AG04450 (cell line): ENCODE measurements at regions of chr19 and their contacts with region 1.

Region 1: DNA sequence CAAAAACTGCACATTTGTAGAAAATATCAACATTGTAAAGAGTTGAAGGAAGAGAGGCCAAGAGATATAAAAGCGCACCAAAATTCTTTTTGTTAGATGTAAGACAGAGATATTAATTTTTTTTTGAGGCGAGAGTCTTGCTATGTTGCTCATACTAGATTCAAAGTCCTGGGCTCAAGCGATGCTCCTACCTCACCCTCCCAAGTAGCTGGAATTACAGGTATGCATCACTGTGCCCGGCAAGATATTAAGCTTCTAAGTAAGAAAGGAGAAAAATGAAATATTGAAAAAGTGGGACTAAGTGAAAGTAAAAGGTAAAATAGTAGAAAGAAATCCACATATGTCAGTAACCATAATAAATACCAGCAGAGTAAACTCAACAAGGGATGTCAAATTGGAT is 12.3 kb downstream of the SIGLEC5 start:
- DNase-seq: no peak
- H3K4me3 ChIP-seq: no peak overlapping the region
- H3K27ac ChIP-seq: no peak overlapping the region
- H3K27me3 ChIP-seq: no peaks in the 10 kb centered on the region
- CTCF ChIP-seq: no peak

Region 2: DNA sequence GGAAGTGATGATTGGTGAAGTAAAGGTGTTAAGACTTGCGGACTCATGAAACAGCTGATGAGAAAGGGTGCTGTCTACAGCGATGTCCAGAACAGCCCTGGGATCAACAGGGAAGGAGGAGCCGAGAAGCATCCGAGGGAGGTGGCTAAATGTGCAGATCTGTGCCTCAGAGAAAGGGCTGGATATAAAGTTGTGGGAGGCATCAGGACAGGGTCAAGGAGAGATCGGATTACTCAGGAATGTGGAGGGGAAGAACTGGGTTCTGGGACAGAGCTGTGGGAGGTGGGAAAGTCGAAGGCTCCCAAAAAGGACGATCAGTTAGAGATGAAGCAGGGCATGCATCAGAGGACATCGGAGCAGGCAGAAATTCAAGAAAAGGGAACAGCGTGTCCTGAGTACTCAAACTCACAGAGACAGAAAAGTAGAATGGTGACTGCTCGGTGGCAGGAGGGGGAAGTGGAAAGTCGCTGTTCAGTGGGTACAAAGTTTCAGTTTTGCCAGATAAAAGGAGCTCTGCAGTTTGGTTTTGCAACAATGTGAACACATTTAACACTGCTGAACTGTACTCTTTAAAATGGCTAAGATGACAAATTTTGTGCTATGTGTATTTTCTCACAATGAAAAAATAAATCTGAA is 26.9 kb after region 1 on chr19:
- CTCF ChIA-PET with region 1: interaction called, 12 read pairs
- POLR2A ChIA-PET with region 1: no interaction called
- DNase-seq: no peak
- H3K4me3 ChIP-seq: no peak overlapping the region
- H3K27ac ChIP-seq: no peak overlapping the region
- H3K27me3 ChIP-seq: no peaks in the 10 kb centered on the region
- CTCF ChIP-seq: no peak

Region 3: DNA sequence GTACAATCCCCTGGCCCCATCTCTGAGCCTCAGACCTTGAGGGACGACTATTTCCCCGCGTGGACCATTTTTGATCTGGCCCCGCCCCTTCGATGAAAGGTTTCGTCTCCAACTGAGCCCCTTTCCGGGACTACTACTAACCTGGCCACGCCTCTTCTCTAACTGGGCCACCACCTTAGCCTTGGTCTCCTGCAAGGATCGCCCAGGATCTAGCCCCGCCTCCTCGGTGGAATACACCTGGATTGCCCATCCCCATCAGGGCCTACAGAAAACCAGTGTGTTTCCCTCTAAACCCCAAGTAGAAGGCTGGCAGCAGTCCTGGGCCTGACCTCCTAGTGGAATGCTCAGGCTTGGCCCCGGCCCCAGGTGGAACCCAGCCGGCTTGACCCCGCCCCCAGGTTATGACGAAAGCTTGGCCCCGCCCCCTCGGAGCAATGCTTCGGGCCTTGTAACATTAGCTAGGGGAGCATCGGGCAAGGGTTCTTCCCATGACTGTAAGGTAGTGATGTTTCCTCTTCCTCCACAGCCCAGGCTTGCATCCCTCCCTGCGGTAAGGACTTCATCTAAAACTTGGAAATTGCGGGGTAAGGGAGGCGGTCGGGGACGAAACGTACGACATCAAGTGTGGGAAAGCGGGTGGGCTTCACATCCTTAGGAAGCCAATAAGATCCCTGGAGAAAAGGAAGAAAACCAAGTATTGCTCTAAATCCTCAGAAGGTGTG is 84.4 kb after region 1 on chr19:
- CTCF ChIA-PET with region 1: no interaction called
- POLR2A ChIA-PET with region 1: no interaction called
- DNase-seq: no peak
- H3K4me3 ChIP-seq: no peak overlapping the region
- H3K27ac ChIP-seq: no peak overlapping the region
- H3K27me3 ChIP-seq: no peaks in the 10 kb centered on the region
- CTCF ChIP-seq: no peak